CD8-positive, alpha-beta memory T cell (primary cell): ENCODE measurements at regions of chr5 and their contacts with region 1.

Region 1: DNA sequence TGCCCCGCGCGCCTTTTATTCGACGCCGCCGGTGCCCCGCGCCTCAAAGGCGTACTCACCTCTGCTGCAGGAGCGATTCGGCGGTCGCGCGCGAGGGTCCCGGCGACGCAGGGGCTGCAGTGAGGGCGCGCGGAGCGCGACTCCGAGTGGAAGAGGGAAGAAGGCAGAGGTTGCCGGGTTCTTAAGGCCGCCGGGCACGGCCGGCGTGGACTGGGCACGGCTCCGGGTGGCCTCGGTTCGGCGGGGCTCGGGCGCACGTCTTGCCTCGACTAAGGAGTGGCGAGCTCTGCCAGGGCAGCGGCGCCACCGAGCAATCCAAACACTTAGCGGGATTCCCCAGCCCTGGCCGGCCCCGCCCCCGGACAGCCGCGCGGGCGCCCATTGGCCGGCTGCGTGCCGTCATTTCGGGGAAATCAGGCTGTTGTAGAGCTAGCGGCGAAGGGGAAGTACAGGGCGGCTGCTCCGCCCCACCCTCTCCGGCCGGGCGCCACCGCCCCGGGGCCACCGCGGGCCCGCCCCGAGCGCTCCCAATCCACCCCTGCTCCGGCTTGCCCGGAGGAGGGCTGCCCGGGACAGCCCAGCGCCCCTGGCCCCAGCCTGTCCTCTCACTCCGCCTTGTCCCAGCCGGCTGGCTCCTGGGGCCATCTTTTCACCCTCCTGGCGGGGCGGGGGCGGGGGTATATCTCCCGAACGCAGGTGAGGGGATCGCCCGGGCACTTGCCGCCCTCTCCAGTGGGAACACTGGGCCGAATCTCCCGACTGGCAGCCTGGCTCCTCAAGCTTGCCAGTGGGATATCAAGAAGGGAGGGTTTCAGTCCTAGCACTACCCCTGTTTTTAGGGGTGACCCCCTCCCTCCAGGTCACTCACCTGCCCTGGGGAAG is at the start of gene IRF1:
- DNase-seq: peak; percentile 95 to 99 (median 98)
- H3K4me3 ChIP-seq: peak within 1 kb of the TSS; percentile 88
- H3K4me3 Mint-ChIP-seq: peak within 1 kb of the TSS; percentile 88 to 99 (median 96)
- H3K27ac ChIP-seq: peak within 1 kb of the TSS; percentile 96
- H3K27ac Mint-ChIP-seq: peak within 1 kb of the TSS; percentile 97 to 100 (median 98)
- H3K4me1 ChIP-seq: peaks cover 80% of the 10 kb centered on the region
- H3K4me1 Mint-ChIP-seq: peaks cover 69 to 80% (median 77%) of the 10 kb centered on the region in 3 donors
- H3K27me3 ChIP-seq: no peaks in the 10 kb centered on the region
- H3K27me3 Mint-ChIP-seq: peaks cover 0 to 13% of the 10 kb centered on the region in 2 donors
- total RNA-seq, gene IRF1: 115 to 121 TPM

Region 2: GRCh38 chr5:132386644-132387286 is 104.0 kb before region 1 on chr5:
- CTCF ChIA-PET with region 1: interaction called, 299 read pairs
- POLR2A ChIA-PET with region 1: interaction called, 6 read pairs
- DNase-seq: peak; percentile 60 to 86 (median 72)
- H3K4me3 ChIP-seq: no peak overlapping the region
- H3K4me3 Mint-ChIP-seq: peak overlapping the region in 1 of 7 donors; percentile 56
- H3K27ac ChIP-seq: no peak overlapping the region
- H3K27ac Mint-ChIP-seq: peak overlapping the region in 6 of 8 donors; percentile 7 to 85 (median 53)
- H3K4me1 ChIP-seq: peaks cover 19% of the 10 kb centered on the region
- H3K4me1 Mint-ChIP-seq: peaks cover 20 to 37% (median 23%) of the 10 kb centered on the region in 3 donors
- H3K27me3 ChIP-seq: no peaks in the 10 kb centered on the region
- H3K27me3 Mint-ChIP-seq: no peaks in the 10 kb centered on the region

Region 3: GRCh38 chr5:132426525-132427138 is 64.1 kb before region 1 on chr5:
- CTCF ChIA-PET with region 1: interaction called, 112 read pairs
- POLR2A ChIA-PET with region 1: interaction called, 85 read pairs
- DNase-seq: peak; percentile 37 to 83 (median 52)
- H3K4me3 ChIP-seq: peak overlapping the region; percentile 57
- H3K4me3 Mint-ChIP-seq: peak overlapping the region; percentile 61 to 89 (median 79)
- H3K27ac ChIP-seq: peak overlapping the region; percentile 84
- H3K27ac Mint-ChIP-seq: peak overlapping the region; percentile 95 to 99 (median 98)
- H3K4me1 ChIP-seq: peaks cover 100% of the 10 kb centered on the region
- H3K4me1 Mint-ChIP-seq: peaks cover 96 to 98% (median 97%) of the 10 kb centered on the region in 3 donors
- H3K27me3 ChIP-seq: no peaks in the 10 kb centered on the region
- H3K27me3 Mint-ChIP-seq: no peaks in the 10 kb centered on the region

Region 4: DNA sequence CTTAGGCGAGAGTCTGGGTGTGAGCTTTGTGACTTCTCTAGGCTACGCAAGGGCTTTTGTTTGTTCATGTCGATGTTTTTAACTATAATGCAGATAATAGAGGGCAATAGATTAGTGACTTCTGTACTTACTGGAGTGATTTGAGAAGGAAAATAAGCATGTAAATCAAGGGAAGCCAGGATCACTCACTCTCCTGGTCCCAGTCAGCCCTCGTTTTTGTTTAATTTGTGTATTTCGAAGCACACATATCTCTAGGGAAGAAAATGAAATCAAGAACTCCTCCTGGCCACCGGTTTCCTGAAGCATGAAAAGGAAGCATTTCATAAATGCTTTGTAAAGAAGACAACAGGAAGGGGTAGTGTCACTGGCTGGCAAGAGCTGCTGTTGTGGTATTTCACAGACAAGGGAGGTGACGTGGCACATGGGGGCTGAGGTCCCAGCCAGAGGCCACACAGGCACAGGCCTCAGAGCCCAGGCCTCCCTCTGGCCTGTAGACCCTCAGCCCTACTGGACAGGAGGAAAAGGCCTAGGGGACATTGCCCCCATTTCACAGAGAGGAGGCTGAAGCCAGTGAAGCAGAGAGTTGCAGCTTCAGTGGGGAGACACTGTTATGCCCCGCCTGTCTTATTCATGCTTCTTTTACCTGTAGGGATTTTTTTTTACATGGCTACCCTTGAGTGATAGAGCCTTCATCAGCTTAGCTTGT is 34.3 kb before region 1 on chr5:
- CTCF ChIA-PET with region 1: interaction called, 63 read pairs
- POLR2A ChIA-PET with region 1: interaction called, 99 read pairs
- DNase-seq: peak; percentile 55 to 85 (median 78)
- H3K4me3 ChIP-seq: peak overlapping the region; percentile 47
- H3K4me3 Mint-ChIP-seq: peak overlapping the region; percentile 37 to 86 (median 81)
- H3K27ac ChIP-seq: peak overlapping the region; percentile 93
- H3K27ac Mint-ChIP-seq: peak overlapping the region; percentile 98 to 100 (median 100)
- H3K4me1 ChIP-seq: peaks cover 94% of the 10 kb centered on the region
- H3K4me1 Mint-ChIP-seq: peaks cover 92 to 97% (median 95%) of the 10 kb centered on the region in 3 donors
- H3K27me3 ChIP-seq: no peaks in the 10 kb centered on the region
- H3K27me3 Mint-ChIP-seq: peaks cover 0 to 2% of the 10 kb centered on the region in 2 donors

Region 5: GRCh38 chr5:132473019-132473531 is 17.7 kb before region 1 on chr5:
- CTCF ChIA-PET with region 1: interaction called, 222 read pairs
- POLR2A ChIA-PET with region 1: interaction called, 104 read pairs
- DNase-seq: peak; percentile 81 to 96 (median 89)
- H3K4me3 ChIP-seq: no peak overlapping the region
- H3K4me3 Mint-ChIP-seq: peak overlapping the region; percentile 39 to 86 (median 64)
- H3K27ac ChIP-seq: peak overlapping the region; percentile 62
- H3K27ac Mint-ChIP-seq: peak overlapping the region; percentile 93 to 99 (median 96)
- H3K4me1 ChIP-seq: peaks cover 86% of the 10 kb centered on the region
- H3K4me1 Mint-ChIP-seq: peaks cover 87 to 99% (median 97%) of the 10 kb centered on the region in 3 donors
- H3K27me3 ChIP-seq: no peaks in the 10 kb centered on the region
- H3K27me3 Mint-ChIP-seq: peaks cover 0 to 9% of the 10 kb centered on the region in 2 donors